ENCODE measurements at regions of chr11 and their contacts with region 1.

Region 1: GRCh38 chr11:86559311-86559945 is 113.0 kb downstream of the ME3 start:
- DNase-seq: peak in 1 of 2 donors; percentile 40
- H3K4me3 ChIP-seq: no peak overlapping the region
- H3K27ac ChIP-seq: peak overlapping the region; percentile 59 to 76
- H3K4me1 ChIP-seq: no peaks in the 10 kb centered on the region
- H3K27me3 ChIP-seq: no peaks in the 10 kb centered on the region
- CTCF ChIP-seq: no peak
- POLR2A ChIP-seq: no peak

Region 2: GRCh38 chr11:86588566-86589090 is 29.2 kb after region 1 on chr11:
- intact Hi-C with region 1: loop called (anchors 1 kb)
- DNase-seq: no peak
- H3K4me3 ChIP-seq: no peak overlapping the region
- H3K27ac ChIP-seq: peak overlapping the region in 1 of 2 donors; percentile 40
- H3K4me1 ChIP-seq: no peaks in the 10 kb centered on the region
- H3K27me3 ChIP-seq: no peaks in the 10 kb centered on the region
- CTCF ChIP-seq: no peak
- POLR2A ChIP-seq: no peak

Measured in breast epithelium (tissue), 4 donors.